ENCODE measurements at regions of chr5 and their contacts with region 1.

Region 1: GRCh38 chr5:82351754-82352145 is 73.6 kb upstream of the RPS23 start:
- DNase-seq: peak in 2 of 9 experiments; percentile 66 to 73
- ATAC-seq: peak; percentile 61
- H3K4me3 ChIP-seq: no peak overlapping the region
- H3K4me3 Mint-ChIP-seq: no peak overlapping the region
- H3K27ac ChIP-seq: no peak overlapping the region
- H3K27ac Mint-ChIP-seq: no peak overlapping the region
- H3K4me1 ChIP-seq: peaks cover 4% of the 10 kb centered on the region
- H3K4me1 Mint-ChIP-seq: peaks cover 7% of the 10 kb centered on the region
- H3K27me3 ChIP-seq: no peaks in the 10 kb centered on the region
- H3K27me3 Mint-ChIP-seq: no peaks in the 10 kb centered on the region
- CTCF ChIP-seq: peak; percentile 77

Region 2: DNA sequence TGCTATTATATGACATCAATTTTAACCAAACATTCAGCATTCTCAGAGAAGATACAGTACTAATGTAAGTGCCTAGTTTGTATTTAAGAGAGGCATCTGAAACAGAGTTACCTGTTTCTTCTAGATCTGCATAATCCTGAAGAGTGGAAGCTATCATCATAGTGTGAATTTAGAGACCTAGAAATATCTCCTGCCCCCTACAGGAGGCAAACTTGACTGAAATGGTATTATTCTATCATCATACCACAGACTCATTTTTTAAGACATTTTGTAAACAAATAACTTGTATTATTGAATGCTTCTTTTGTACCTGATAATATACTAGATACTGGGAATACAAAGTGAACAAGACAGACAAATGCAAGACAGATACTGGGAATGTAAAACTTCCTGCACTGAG is 143.2 kb after region 1 on chr5:
- CTCF ChIA-PET with region 1: no interaction called
- POLR2A ChIA-PET with region 1: no interaction called
- intact Hi-C with region 1: loop called in 1 of 2 experiments (anchors 5 kb)
- DNase-seq: no peak
- ATAC-seq: no peak
- H3K4me3 ChIP-seq: no peak overlapping the region
- H3K4me3 Mint-ChIP-seq: no peak overlapping the region
- H3K27ac ChIP-seq: no peak overlapping the region
- H3K27ac Mint-ChIP-seq: no peak overlapping the region
- H3K4me1 ChIP-seq: no peaks in the 10 kb centered on the region
- H3K4me1 Mint-ChIP-seq: no peaks in the 10 kb centered on the region
- H3K27me3 ChIP-seq: no peaks in the 10 kb centered on the region
- H3K27me3 Mint-ChIP-seq: no peaks in the 10 kb centered on the region
- CTCF ChIP-seq: no peak

Region 3: DNA sequence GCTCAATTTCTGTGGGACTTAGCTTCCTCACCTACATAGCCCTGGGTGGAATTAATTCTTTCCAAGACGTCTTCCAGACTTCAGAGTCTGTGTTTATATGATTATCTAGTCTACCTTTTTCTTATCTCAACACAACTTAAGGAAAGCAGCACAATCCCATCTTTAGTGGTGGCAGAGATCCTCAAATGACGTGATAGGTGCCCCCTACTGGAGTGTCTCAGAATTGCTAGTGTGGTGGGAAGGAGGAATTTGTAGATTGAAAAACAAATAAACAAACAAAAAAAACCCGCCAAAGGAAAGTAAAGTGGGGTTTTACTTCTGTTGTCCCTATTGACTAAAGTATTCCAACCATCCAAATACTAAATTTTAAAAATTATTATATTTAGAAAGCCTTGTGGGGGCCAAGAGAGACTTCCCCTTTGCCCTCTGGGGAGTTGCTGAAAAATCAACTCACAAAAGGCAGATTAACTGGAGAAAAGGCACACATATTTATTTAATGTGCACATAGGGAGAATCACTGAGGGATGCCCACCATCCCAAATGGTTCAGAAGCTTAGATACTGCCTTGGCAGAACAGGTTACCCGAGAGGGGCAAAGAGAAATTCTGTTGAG is 442.2 kb after region 1 on chr5:
- CTCF ChIA-PET with region 1: interaction called, 60 read pairs
- POLR2A ChIA-PET with region 1: no interaction called
- intact Hi-C with region 1: loop called (anchors 1 kb)
- DNase-seq: peak in 7 of 9 experiments; percentile 9 to 51 (median 30)
- ATAC-seq: no peak
- H3K4me3 ChIP-seq: no peak overlapping the region
- H3K4me3 Mint-ChIP-seq: no peak overlapping the region
- H3K27ac ChIP-seq: no peak overlapping the region
- H3K27ac Mint-ChIP-seq: no peak overlapping the region
- H3K4me1 ChIP-seq: no peaks in the 10 kb centered on the region
- H3K4me1 Mint-ChIP-seq: no peaks in the 10 kb centered on the region
- H3K27me3 ChIP-seq: no peaks in the 10 kb centered on the region
- H3K27me3 Mint-ChIP-seq: peaks cover 8% of the 10 kb centered on the region
- CTCF ChIP-seq: peak; percentile 82

Region 4: GRCh38 chr5:83430130-83431010 is 1078.6 kb after region 1 on chr5:
- CTCF ChIA-PET with region 1: interaction called, 16 read pairs
- POLR2A ChIA-PET with region 1: no interaction called
- intact Hi-C with region 1: loop called (anchors 1 kb)
- DNase-seq: peak; percentile 1 to 64 (median 34)
- ATAC-seq: no peak
- H3K4me3 ChIP-seq: no peak overlapping the region
- H3K4me3 Mint-ChIP-seq: no peak overlapping the region
- H3K27ac ChIP-seq: no peak overlapping the region
- H3K27ac Mint-ChIP-seq: no peak overlapping the region
- H3K4me1 ChIP-seq: no peaks in the 10 kb centered on the region
- H3K4me1 Mint-ChIP-seq: no peaks in the 10 kb centered on the region
- H3K27me3 ChIP-seq: no peaks in the 10 kb centered on the region
- H3K27me3 Mint-ChIP-seq: no peaks in the 10 kb centered on the region
- CTCF ChIP-seq: peak; percentile 65

Region 5: DNA sequence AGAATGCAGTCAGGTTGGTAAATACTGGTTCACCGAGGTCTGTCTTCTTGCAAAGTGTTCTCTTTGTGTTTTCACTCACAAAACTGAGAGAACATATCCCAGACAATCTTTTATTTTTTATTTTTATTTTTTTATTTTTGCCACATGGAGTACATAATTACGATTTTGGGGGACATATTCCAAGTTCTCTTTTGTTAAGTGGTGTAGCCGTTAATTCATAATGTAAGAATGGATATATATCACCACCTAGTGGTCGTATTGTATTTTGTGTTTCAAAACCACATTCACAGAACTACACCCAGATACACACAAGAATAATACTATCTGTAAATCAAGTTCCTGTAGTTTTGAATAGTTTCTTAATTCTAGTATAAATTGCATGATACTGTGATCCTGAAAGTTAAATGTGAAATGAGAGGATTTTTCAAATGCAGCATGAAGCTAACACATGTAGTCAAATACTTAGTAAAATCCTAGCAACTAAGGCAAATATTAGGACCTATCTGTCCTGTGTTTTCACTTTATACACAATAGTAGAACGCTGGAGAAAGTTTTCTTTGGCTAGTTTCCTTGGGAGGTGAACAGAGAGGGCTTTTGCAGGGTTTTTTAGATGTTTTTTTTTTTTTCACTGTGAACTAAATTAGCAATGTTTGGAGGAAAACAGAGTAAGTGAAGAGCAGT is 1212.5 kb after region 1 on chr5:
- CTCF ChIA-PET with region 1: interaction called, 23 read pairs
- POLR2A ChIA-PET with region 1: no interaction called
- intact Hi-C with region 1: loop called in 1 of 2 experiments (anchors 1 kb)
- DNase-seq: peak in 2 of 9 experiments; percentile 30 to 50
- ATAC-seq: no peak
- H3K4me3 ChIP-seq: no peak overlapping the region
- H3K4me3 Mint-ChIP-seq: no peak overlapping the region
- H3K27ac ChIP-seq: no peak overlapping the region
- H3K27ac Mint-ChIP-seq: no peak overlapping the region
- H3K4me1 ChIP-seq: no peaks in the 10 kb centered on the region
- H3K4me1 Mint-ChIP-seq: no peaks in the 10 kb centered on the region
- H3K27me3 ChIP-seq: peaks cover 0 to 2% of the 10 kb centered on the region in 2 experiments
- H3K27me3 Mint-ChIP-seq: no peaks in the 10 kb centered on the region
- CTCF ChIP-seq: peak; percentile 76

Measured in CD8-positive, alpha-beta T cell (primary cell).